T-cell (primary cell): ENCODE measurements at regions of chr5 and their contacts with region 1.

Region 1: GRCh38 chr5:73674669-73675004 is 48.6 kb downstream of the ARHGEF28 start:
- DNase-seq: no peak
- ATAC-seq: no peak
- H3K4me3 ChIP-seq: no peak overlapping the region
- H3K4me3 Mint-ChIP-seq: no peak overlapping the region
- H3K27ac ChIP-seq: no peak overlapping the region
- H3K27ac Mint-ChIP-seq: no peak overlapping the region
- H3K4me1 ChIP-seq: no peaks in the 10 kb centered on the region
- H3K4me1 Mint-ChIP-seq: no peaks in the 10 kb centered on the region
- H3K27me3 ChIP-seq: no peaks in the 10 kb centered on the region
- H3K27me3 Mint-ChIP-seq: peaks cover 2 to 6% of the 10 kb centered on the region in 2 donors

Region 2: DNA sequence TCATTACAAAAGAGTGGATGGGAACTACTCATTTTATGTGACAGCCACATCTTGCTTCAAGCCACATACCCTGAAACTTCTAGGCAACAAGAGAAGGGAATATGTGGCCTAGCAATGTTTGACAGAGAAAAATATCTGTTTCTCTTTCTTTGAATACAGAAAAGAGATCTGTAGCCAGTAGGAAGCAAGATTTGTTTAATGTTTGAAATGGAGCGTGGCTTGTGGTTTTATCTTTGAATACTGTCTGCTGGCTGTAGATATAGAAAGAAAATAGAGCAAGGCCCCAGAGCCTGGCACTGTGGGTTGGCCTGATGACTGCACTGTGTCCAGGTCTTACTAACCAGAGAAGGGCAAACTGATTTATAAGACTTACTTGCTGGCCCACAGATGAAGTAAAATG is 85.1 kb after region 1 on chr5:
- CTCF ChIA-PET with region 1: no interaction called
- POLR2A ChIA-PET with region 1: interaction called in 1 of 2 experiments, 11 read pairs
- DNase-seq: no peak
- ATAC-seq: no peak
- H3K4me3 ChIP-seq: no peak overlapping the region
- H3K4me3 Mint-ChIP-seq: no peak overlapping the region
- H3K27ac ChIP-seq: no peak overlapping the region
- H3K27ac Mint-ChIP-seq: no peak overlapping the region
- H3K4me1 ChIP-seq: no peaks in the 10 kb centered on the region
- H3K4me1 Mint-ChIP-seq: no peaks in the 10 kb centered on the region
- H3K27me3 ChIP-seq: peaks cover 0 to 3% of the 10 kb centered on the region in 2 experiments
- H3K27me3 Mint-ChIP-seq: peaks cover 4 to 15% of the 10 kb centered on the region in 2 donors

Region 3: DNA sequence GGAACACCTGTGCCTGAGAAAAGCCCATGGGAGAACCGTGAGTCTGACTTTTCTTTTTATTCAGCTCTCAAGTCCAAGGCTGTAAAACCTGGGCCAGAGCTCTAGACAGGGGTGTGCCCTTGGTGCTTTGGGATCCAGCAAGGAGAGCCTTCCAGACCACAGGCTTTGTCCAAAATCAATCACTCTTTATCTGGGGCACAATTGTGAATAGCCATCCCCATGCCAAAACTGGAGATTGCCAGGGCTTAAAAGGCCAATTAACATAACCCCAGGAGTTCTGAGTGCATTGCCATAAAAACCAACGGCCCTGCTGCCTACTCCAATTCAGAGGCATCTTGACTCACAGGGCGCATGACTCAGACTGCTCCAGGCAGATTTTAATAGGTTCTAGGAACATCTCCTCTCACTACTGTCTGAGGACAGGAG is 343.2 kb after region 1 on chr5:
- CTCF ChIA-PET with region 1: no interaction called
- POLR2A ChIA-PET with region 1: no interaction called
- DNase-seq: no peak
- ATAC-seq: no peak
- H3K4me3 ChIP-seq: no peak overlapping the region
- H3K4me3 Mint-ChIP-seq: no peak overlapping the region
- H3K27ac ChIP-seq: no peak overlapping the region
- H3K27ac Mint-ChIP-seq: no peak overlapping the region
- H3K4me1 ChIP-seq: no peaks in the 10 kb centered on the region
- H3K4me1 Mint-ChIP-seq: no peaks in the 10 kb centered on the region
- H3K27me3 ChIP-seq: peaks cover 0 to 15% of the 10 kb centered on the region in 2 experiments
- H3K27me3 Mint-ChIP-seq: peaks cover 16 to 17% of the 10 kb centered on the region in 2 donors